Panc1 (cell line): ENCODE measurements at regions of chrX and their contacts with region 1.

Region 1: GRCh38 chrX:22192417-22193060 is 80.2 kb upstream of the CBLL2 start:
- DNase-seq: peak; percentile 13
- ATAC-seq: peak; percentile 81
- H3K4me3 ChIP-seq: peak overlapping the region in 1 of 2 experiments; percentile 31; a peak in 1 of 4 replicates
- H3K27ac ChIP-seq: no peak overlapping the region
- H3K4me1 ChIP-seq: no peaks in the 10 kb centered on the region
- H3K27me3 ChIP-seq: no peaks in the 10 kb centered on the region
- CTCF ChIP-seq: peak; percentile 78

Region 2: DNA sequence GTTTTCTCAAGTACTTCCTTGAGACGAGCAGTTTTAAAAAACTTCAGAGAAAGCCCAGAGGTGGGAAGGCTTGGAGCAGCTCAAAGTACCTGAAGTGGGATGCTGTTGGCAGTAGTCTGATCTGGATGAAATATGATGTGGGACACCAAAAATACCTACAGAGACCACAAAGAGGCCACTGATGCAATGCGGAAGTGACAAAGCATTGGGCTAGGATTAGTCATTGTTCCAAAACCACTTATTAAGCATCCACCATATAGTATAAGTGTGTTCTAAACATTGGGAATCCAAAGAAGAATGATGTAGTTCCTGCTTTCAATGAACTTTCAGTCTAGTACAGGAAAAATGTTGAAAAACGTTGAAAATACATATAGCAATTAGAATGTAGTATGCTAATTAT is 1204.4 kb before region 1 on chrX:
- CTCF ChIA-PET with region 1: no interaction called
- POLR2A ChIA-PET with region 1: no interaction called
- in situ Hi-C with region 1: no loop called
- intact Hi-C with region 1: no loop called
- DNase-seq: no peak
- ATAC-seq: no peak
- H3K4me3 ChIP-seq: no peak overlapping the region
- H3K27ac ChIP-seq: no peak overlapping the region
- H3K4me1 ChIP-seq: no peaks in the 10 kb centered on the region
- H3K27me3 ChIP-seq: no peaks in the 10 kb centered on the region
- CTCF ChIP-seq: no peak

Region 3: DNA sequence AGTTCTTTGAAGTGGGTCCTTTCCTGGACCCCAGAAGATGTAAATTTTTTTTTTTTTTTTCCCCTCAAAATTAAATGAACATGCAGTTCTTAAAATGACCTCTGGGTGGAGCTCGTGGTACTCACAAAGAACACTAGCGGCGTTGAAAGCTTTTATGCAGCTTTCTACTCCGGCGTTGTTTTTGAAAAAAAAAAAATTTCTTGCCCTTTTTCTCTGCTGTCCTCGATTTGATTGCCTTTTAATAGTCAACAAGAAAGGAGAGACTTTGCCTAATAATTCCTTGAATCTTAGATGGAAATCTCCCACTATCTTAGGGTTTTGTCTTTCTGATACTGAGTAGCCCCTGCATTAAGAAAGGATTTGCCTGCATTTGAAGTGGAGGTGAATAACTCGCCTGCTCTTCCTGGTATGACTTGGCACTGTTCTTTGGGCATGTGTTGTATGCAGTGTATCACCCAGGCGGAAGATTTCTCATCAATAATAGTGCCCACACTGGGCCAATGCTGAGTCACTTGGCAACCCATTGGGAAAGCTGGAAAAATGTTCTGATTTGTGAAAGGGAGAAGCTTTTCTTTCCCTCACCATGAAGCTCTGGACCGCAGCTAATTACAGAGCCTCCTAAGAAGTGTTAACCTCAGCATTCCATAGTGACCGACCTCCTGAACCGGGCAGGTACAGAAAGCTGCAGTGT is 56.4 kb before region 1 on chrX:
- CTCF ChIA-PET with region 1: no interaction called
- POLR2A ChIA-PET with region 1: no interaction called
- in situ Hi-C with region 1: no loop called
- intact Hi-C with region 1: loop called (anchors 5 kb)
- DNase-seq: no peak
- ATAC-seq: no peak
- H3K4me3 ChIP-seq: no peak overlapping the region
- H3K27ac ChIP-seq: 0 out of 2 replicates have a peak overlapping the region, but pooled peaks have one; percentile 23
- H3K4me1 ChIP-seq: peaks cover 9% of the 10 kb centered on the region; the same call in 1 of the 2 replicates
- H3K27me3 ChIP-seq: no peaks in the 10 kb centered on the region
- CTCF ChIP-seq: peak; percentile 70